ENCODE measurements at regions of chr17 and their contacts with region 1.

Region 1: GRCh38 chr17:43878260-43879175 is 28.8 kb downstream of the MPP2 start:
- DNase-seq: peak in 13 of 14 experiments; percentile 49 to 78 (median 60)
- ATAC-seq: peak; percentile 86
- H3K4me3 ChIP-seq: no peak overlapping the region
- H3K4me3 Mint-ChIP-seq: no peak overlapping the region
- H3K27ac ChIP-seq: no peak overlapping the region
- H3K27ac Mint-ChIP-seq: no peak overlapping the region
- H3K4me1 ChIP-seq: peaks cover 8% of the 10 kb centered on the region
- H3K4me1 Mint-ChIP-seq: no peaks in the 10 kb centered on the region
- H3K27me3 ChIP-seq: no peaks in the 10 kb centered on the region
- H3K27me3 Mint-ChIP-seq: peaks cover 12% of the 10 kb centered on the region
- CTCF ChIP-seq: peak; percentile 92

Region 2: DNA sequence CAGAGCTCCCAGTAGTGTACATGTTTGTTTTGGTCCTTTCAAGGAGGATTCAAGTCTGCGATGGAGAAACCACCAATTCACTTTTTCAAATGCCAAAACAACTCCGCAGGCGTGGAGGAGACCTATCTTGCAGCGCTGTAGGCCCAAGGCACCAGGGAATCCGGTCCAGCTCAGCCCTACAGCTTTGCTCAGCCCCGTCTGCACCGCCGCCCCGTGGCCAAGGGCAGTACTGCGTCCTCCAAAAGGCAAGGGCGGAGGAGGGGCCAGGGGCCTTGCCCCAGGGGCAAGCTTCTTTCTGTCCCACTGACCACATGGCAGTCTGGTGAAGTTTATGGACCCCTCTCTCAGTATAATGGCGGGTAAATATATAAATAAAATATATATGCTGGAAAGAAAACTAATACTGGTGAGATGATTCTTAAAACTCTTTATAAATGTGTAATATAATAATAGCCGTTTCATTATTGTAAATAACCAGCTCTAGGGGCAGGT is 32.3 kb before region 1 on chr17:
- CTCF ChIA-PET with region 1: no interaction called
- POLR2A ChIA-PET with region 1: no interaction called
- intact Hi-C with region 1: no loop called
- DNase-seq: peak; percentile 59 to 83 (median 72)
- ATAC-seq: peak; percentile 100
- H3K4me3 ChIP-seq: no peak overlapping the region
- H3K4me3 Mint-ChIP-seq: no peak overlapping the region
- H3K27ac ChIP-seq: no peak overlapping the region
- H3K27ac Mint-ChIP-seq: no peak overlapping the region
- H3K4me1 ChIP-seq: no peaks in the 10 kb centered on the region
- H3K4me1 Mint-ChIP-seq: no peaks in the 10 kb centered on the region
- H3K27me3 ChIP-seq: peaks cover 3 to 7% of the 10 kb centered on the region in 2 experiments
- H3K27me3 Mint-ChIP-seq: peaks cover 40% of the 10 kb centered on the region
- CTCF ChIP-seq: peak; percentile 92

Region 3: DNA sequence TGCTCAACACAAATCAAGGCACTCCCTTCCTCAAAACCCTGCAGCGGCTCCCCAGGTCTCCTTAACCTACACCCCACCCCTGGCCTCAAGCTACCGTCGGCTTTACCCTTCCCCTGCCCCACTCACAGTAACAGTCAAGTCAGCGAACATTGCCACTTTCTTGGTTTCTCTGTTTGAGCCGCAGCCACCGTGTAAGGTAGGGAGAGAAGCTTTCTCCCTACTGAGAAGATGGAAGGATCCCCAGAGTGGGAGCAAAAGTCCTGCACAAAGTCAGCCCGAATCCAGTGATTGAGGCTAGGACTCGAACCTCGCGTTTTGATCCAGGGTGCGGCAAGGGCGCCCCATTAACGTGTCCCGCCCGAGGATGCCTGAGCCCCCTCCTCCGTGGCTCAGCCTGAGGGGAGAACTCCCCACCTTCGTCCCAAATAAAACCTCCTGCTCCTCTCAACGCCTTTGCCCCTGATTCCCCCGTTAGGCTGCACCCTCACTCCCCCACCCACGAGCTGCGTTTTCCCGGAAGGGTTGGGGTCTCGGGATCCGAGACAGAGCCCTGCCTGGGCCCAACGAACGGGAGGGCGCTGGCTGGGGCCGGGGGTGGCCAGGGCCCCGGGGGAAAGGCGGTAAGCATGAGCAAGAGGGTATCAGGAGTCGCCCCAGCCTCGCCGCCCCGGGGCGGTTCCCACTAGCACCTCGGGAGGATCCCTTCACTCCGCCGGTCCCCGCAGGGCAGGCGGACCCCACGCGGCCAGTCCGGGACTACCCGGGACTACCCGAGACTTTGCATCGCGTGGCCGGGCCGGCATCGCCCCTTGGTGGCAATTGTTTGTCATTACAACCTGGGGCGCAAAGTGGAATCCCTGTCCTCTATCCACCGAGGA is 116.0 kb after region 1 on chr17:
- CTCF ChIA-PET with region 1: interaction called, 5 read pairs
- POLR2A ChIA-PET with region 1: no interaction called
- intact Hi-C with region 1: loop called (anchors 1 to 2 kb)
- DNase-seq: peak; percentile 50 to 82 (median 61)
- ATAC-seq: peak; percentile 92
- H3K4me3 ChIP-seq: peak overlapping the region; percentile 33
- H3K4me3 Mint-ChIP-seq: no peak overlapping the region
- H3K27ac ChIP-seq: no peak overlapping the region
- H3K27ac Mint-ChIP-seq: no peak overlapping the region
- H3K4me1 ChIP-seq: peaks cover 10% of the 10 kb centered on the region
- H3K4me1 Mint-ChIP-seq: no peaks in the 10 kb centered on the region
- H3K27me3 ChIP-seq: peaks cover 9 to 13% of the 10 kb centered on the region in 2 experiments
- H3K27me3 Mint-ChIP-seq: peaks cover 33% of the 10 kb centered on the region
- CTCF ChIP-seq: peak; percentile 77

Region 4: GRCh38 chr17:44044067-44044466 is 165.5 kb after region 1 on chr17:
- CTCF ChIA-PET with region 1: interaction called, 6 read pairs
- POLR2A ChIA-PET with region 1: no interaction called
- intact Hi-C with region 1: loop called (anchors 1 to 2 kb)
- DNase-seq: no peak
- ATAC-seq: no peak
- H3K4me3 ChIP-seq: no peak overlapping the region
- H3K4me3 Mint-ChIP-seq: no peak overlapping the region
- H3K27ac ChIP-seq: no peak overlapping the region
- H3K27ac Mint-ChIP-seq: no peak overlapping the region
- H3K4me1 ChIP-seq: peaks cover 6% of the 10 kb centered on the region
- H3K4me1 Mint-ChIP-seq: peaks cover 13% of the 10 kb centered on the region
- H3K27me3 ChIP-seq: no peaks in the 10 kb centered on the region
- H3K27me3 Mint-ChIP-seq: no peaks in the 10 kb centered on the region
- CTCF ChIP-seq: no peak

Measured in CD4-positive, alpha-beta T cell (primary cell).